ENCODE measurements at regions of chr13 and their contacts with region 1.

Region 1: DNA sequence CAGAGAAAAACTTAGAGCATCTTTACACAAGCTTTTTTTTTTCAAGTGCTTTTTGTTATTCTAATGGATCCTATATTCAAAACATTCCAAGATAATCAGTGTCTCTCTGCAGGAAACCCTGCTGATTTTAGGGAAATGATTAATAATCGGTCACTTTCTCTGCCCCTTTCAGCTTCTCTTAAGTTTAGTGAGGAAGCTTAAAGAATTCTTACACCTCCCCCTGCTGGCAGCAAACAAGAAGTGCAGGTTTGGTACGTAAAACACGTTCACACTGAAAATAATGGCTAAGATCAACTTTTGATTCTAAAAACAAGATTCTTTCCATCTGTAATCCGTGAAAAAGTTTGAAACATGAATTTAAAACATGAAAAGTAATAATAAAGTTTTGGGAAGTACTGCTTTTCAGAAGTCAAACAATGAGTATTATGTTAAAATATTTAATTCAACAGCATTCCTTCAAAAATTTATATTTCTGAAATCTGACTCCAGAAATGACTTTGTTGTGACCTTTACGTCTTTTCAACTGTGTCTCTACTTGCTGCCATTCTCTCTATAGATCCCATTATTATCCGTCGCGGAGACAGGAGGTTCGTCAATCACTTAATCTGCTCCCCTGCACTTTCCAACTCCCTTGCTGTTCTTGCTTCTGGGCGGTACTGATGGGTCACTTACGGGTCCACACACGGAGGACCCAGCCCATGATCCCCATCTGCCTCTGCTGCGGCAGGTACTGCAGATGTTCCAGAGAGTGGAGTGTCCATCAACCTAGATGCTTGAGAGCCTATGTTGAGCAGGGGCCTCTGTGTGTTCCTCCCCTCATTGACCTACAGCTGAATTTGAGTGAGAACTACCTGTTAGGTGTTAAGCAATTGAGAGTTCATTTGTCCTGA is 203.1 kb upstream of the EDNRB start:
- DNase-seq: peak; percentile 68
- ATAC-seq: peak; percentile 56
- H3K4me3 ChIP-seq: no peak overlapping the region
- H3K4me3 Mint-ChIP-seq: no peak overlapping the region
- H3K27ac ChIP-seq: no peak overlapping the region
- H3K27ac Mint-ChIP-seq: no peak overlapping the region
- H3K4me1 ChIP-seq: no peaks in the 10 kb centered on the region
- H3K4me1 Mint-ChIP-seq: no peaks in the 10 kb centered on the region
- H3K27me3 ChIP-seq: no peaks in the 10 kb centered on the region
- H3K27me3 Mint-ChIP-seq: peaks cover 19% of the 10 kb centered on the region
- CTCF ChIP-seq: peak; percentile 98

Region 2: DNA sequence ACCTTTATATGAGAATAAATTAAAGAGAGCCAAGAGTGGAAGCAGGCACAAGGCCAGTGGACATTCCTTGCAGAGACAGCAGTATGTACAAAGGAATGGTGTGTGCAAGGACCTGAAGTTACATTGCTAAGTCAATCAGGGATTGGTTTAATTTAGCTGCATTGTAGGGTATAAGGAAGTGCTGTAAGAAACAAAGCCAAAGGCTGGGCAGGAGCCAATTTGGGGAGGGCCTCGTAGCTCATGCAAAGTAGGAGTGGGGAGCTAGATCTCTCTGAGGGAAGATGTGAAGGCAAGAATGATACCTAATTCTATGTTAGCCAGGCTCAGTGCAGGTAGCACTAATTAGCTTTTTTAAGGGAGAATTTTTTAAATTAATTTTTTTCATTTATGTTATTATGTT is 347.5 kb before region 1 on chr13:
- CTCF ChIA-PET with region 1: interaction called, 40 read pairs
- POLR2A ChIA-PET with region 1: no interaction called
- intact Hi-C with region 1: no loop called
- DNase-seq: no peak
- ATAC-seq: no peak
- H3K4me3 ChIP-seq: no peak overlapping the region
- H3K4me3 Mint-ChIP-seq: no peak overlapping the region
- H3K27ac ChIP-seq: no peak overlapping the region
- H3K27ac Mint-ChIP-seq: no peak overlapping the region
- H3K4me1 ChIP-seq: no peaks in the 10 kb centered on the region
- H3K4me1 Mint-ChIP-seq: no peaks in the 10 kb centered on the region
- H3K27me3 ChIP-seq: no peaks in the 10 kb centered on the region
- H3K27me3 Mint-ChIP-seq: no peaks in the 10 kb centered on the region
- CTCF ChIP-seq: no peak

Region 3: DNA sequence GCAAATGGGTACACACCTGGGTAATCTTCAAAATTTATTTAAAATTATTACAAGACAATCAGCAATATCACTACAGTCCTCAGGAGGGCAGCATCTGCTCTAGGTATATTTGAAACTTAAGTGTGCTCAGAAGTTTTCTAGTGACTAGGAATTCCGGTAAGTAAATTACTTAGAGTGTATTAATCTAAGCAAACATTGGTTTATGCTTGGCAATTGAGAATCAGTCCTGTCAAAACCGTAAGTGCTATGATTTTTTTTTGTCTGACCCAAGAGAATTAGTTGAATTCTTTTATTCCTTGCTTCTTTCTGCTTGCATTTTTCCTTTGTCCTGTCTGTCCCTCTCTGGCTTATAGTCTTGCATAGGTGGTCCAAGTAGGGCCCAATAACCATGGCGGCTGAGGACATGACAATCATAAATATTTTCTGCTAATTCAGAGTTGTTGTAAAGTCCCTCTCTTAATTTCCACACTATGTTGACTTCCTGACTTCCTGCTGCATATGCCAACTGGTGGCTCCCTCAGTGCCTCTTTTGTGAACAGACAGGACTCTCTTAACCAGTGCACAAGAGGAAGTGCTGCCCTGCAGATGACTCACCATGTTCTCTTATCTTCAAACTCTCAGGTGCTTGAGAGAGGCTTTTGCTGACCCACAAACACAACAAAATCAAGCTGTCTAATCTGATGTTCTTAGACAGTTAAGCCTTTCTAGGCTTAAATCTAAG is 342.0 kb before region 1 on chr13:
- CTCF ChIA-PET with region 1: interaction called, 43 read pairs
- POLR2A ChIA-PET with region 1: no interaction called
- intact Hi-C with region 1: no loop called
- DNase-seq: peak; percentile 59
- ATAC-seq: peak; percentile 43
- H3K4me3 ChIP-seq: no peak overlapping the region
- H3K4me3 Mint-ChIP-seq: no peak overlapping the region
- H3K27ac ChIP-seq: no peak overlapping the region
- H3K27ac Mint-ChIP-seq: no peak overlapping the region
- H3K4me1 ChIP-seq: peaks cover 0 to 4% of the 10 kb centered on the region in 2 donors
- H3K4me1 Mint-ChIP-seq: peaks cover 6% of the 10 kb centered on the region
- H3K27me3 ChIP-seq: peaks cover 0 to 3% (median 0%) of the 10 kb centered on the region in 4 experiments
- H3K27me3 Mint-ChIP-seq: peaks cover 5% of the 10 kb centered on the region
- CTCF ChIP-seq: peak; percentile 82

Region 4: DNA sequence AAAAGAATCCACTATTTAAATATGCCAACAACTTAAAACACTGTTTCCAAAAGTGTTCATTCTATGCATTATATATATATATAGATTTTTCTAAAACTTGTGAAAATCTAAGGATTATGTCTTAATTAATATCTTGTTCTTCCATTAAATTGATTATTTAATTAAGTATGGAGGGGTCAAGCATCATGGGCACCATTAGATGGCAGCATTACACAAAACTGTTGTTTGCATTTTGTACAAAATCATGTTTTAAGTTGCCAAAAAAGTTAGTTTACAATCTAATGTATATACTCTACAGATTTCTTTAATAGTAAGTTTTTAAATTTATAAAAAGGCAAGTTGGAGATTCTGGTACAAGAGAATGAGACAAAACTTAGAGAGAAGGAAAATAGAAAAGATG is 10.1 kb after region 1 on chr13:
- CTCF ChIA-PET with region 1: interaction called, 21 read pairs
- POLR2A ChIA-PET with region 1: no interaction called
- intact Hi-C with region 1: no loop called
- DNase-seq: no peak
- ATAC-seq: no peak
- H3K4me3 ChIP-seq: no peak overlapping the region
- H3K4me3 Mint-ChIP-seq: no peak overlapping the region
- H3K27ac ChIP-seq: no peak overlapping the region
- H3K27ac Mint-ChIP-seq: no peak overlapping the region
- H3K4me1 ChIP-seq: no peaks in the 10 kb centered on the region
- H3K4me1 Mint-ChIP-seq: no peaks in the 10 kb centered on the region
- H3K27me3 ChIP-seq: peaks cover 0 to 6% (median 0%) of the 10 kb centered on the region in 4 experiments
- H3K27me3 Mint-ChIP-seq: peaks cover 13% of the 10 kb centered on the region
- CTCF ChIP-seq: no peak